Transverse colon (tissue), 4 donors: ENCODE measurements at regions of chr12 and their contacts with region 1.

Region 1: GRCh38 chr12:45728630-45729232 is 775 bp upstream of the ARID2 start:
- DNase-seq: peak; percentile 98
- H3K4me3 ChIP-seq: peak overlapping the region; percentile 89 to 95 (median 94)
- H3K27ac ChIP-seq: peak overlapping the region; percentile 97 to 100 (median 100)
- H3K4me1 ChIP-seq: peaks cover 19 to 44% (median 33%) of the 10 kb centered on the region in 4 donors
- H3K27me3 ChIP-seq: no peaks in the 10 kb centered on the region
- CTCF ChIP-seq: peak; percentile 84 to 99 (median 93)
- EP300 ChIP-seq: peak; percentile 51
- POLR2A ChIP-seq: peak; percentile 95

Region 2: DNA sequence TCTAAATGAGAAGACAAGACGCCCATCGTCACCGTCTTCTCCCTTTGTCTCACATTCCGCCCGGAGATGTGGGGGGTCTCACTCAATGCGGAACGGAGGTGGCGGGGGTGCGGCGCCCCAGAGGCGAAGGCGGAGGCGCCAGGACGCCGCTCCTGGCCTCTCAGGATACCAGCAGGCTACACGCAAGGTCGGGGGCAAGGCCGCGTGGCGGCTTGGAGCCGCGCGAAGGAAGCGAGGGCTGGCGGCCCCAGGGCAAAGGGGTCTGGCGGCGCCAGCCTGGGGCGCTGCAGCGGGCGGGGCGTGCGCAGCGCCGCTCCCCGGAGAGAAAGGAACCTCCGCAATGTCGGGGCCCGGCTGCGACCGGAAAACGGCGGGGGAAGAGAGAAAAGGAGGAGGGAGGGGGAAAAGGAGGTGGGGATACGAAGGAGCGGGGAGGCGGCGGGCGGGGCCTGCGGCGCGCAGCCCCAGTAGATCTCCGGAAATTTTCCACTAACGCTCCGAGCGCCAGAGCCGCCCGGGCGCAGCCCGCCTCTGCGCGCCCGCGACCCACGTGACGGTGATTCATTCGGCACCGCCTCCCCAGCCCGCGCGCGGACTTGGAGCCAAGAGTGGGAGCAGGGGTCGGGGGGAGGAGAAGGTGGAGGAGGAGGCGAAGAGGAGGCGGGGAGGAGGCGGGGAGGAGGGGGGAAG is 654.4 kb after region 1 on chr12:
- in situ Hi-C with region 1: loop called in 1 of 4 experiments (anchors 25 kb)
- intact Hi-C with region 1: no loop called
- DNase-seq: peak; percentile 98
- H3K4me3 ChIP-seq: peak overlapping the region; percentile 65 to 86 (median 72)
- H3K27ac ChIP-seq: peak overlapping the region; percentile 98 to 100 (median 100)
- H3K4me1 ChIP-seq: peaks cover 7 to 49% (median 29%) of the 10 kb centered on the region in 4 donors
- H3K27me3 ChIP-seq: no peaks in the 10 kb centered on the region
- CTCF ChIP-seq: peak in 3 of 5 experiments; percentile 10 to 49 (median 24)
- EP300 ChIP-seq: no peak
- POLR2A ChIP-seq: peak; percentile 33